Activated CD8-positive, alpha-beta T cell treated with anti-CD3 and anti-CD28 coated beads for 36 hours (primary cell): ENCODE measurements at regions of chr3 and their contacts with region 1.

Region 1: GRCh38 chr3:9503283-9503682 is 50.3 kb downstream of the LHFPL4 start:
- DNase-seq: peak; percentile 89
- ATAC-seq: peak; percentile 67
- H3K4me3 Mint-ChIP-seq: no peak overlapping the region
- H3K27ac Mint-ChIP-seq: no peak overlapping the region
- H3K4me1 Mint-ChIP-seq: peaks cover 3% of the 10 kb centered on the region
- H3K27me3 Mint-ChIP-seq: peaks cover 30% of the 10 kb centered on the region
- CTCF ChIP-seq: peak; percentile 85

Region 2: DNA sequence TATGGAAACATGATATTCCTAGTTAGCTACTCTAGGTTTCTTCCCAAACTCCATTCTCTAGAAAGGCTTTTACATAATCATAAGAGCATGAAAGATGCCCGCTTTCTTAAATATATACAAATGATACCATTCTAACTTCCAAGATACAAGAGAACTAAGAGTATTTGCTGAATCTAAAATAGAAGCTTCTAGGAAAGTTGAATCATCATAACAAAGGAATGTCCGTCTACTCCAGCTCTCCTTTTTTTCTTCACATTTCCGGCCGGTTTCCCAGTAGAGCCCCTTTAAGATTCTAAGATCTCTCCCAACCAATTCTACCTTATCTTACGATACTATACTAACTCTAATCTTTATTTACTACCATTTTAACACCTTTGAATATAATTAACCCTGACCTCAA is 600.1 kb before region 1 on chr3:
- CTCF ChIA-PET with region 1: no interaction called
- POLR2A ChIA-PET with region 1: no interaction called
- intact Hi-C with region 1: no loop called
- DNase-seq: no peak
- ATAC-seq: no peak
- H3K4me3 Mint-ChIP-seq: no peak overlapping the region
- H3K27ac Mint-ChIP-seq: no peak overlapping the region
- H3K4me1 Mint-ChIP-seq: no peaks in the 10 kb centered on the region
- H3K27me3 Mint-ChIP-seq: no peaks in the 10 kb centered on the region
- CTCF ChIP-seq: no peak

Region 3: GRCh38 chr3:9491506-9491905 is 11.8 kb before region 1 on chr3:
- CTCF ChIA-PET with region 1: interaction called, 37 read pairs
- POLR2A ChIA-PET with region 1: no interaction called
- intact Hi-C with region 1: no loop called
- DNase-seq: no peak
- ATAC-seq: no peak
- H3K4me3 Mint-ChIP-seq: no peak overlapping the region
- H3K27ac Mint-ChIP-seq: no peak overlapping the region
- H3K4me1 Mint-ChIP-seq: no peaks in the 10 kb centered on the region
- H3K27me3 Mint-ChIP-seq: no peaks in the 10 kb centered on the region
- CTCF ChIP-seq: no peak

Region 4: GRCh38 chr3:9649791-9650521 is 146.7 kb after region 1 on chr3:
- CTCF ChIA-PET with region 1: interaction called, 7 read pairs
- POLR2A ChIA-PET with region 1: no interaction called
- intact Hi-C with region 1: loop called (anchors 10 kb)
- DNase-seq: no peak
- ATAC-seq: no peak
- H3K4me3 Mint-ChIP-seq: peak overlapping the region; percentile 87
- H3K27ac Mint-ChIP-seq: peak overlapping the region; percentile 94
- H3K4me1 Mint-ChIP-seq: peaks cover 26% of the 10 kb centered on the region
- H3K27me3 Mint-ChIP-seq: no peaks in the 10 kb centered on the region
- CTCF ChIP-seq: no peak